Calu3 (cell line): ENCODE measurements at regions of chr12 and their contacts with region 1.

Region 1: GRCh38 chr12:17579205-17580026 is 510.6 kb downstream of the RERGL start:
- DNase-seq: no peak
- H3K4me3 Mint-ChIP-seq: no peak overlapping the region
- H3K27ac Mint-ChIP-seq: no peak overlapping the region
- H3K4me1 Mint-ChIP-seq: peaks cover 10% of the 10 kb centered on the region
- H3K27me3 Mint-ChIP-seq: no peaks in the 10 kb centered on the region
- CTCF ChIP-seq: no peak

Region 2: DNA sequence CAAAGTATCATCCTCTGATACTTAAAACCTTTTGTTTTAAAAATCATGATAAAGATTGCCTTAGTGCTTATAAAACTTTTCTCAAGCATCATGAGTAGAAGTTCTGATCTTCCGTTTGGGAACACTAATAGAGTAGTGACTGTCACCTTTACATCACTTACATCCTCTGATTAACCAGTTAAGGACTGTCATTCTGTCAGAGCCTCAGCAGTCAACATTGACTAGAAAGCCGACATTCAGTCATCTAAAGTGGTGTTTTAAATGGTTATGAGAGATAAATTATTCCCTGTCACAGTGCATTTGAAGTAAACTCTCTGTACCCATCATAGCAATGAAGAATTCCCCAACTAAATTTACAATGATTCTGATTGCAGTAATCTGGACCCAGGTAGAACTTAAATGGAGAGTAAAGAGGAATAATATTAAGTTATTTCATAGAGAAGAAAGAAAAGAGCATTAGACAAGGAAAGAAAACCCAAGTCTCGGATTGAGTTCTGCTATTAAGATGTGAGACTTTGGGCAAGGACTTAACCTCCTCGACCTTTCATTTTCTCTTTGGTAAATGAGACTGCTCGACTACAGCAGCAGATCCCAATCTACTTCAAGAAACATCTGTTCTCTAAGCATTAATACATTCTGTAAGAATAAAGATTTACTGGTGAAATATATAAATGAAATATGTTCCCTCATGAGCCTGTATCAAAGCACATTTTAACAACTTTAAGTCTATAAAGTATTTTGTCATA is 409.5 kb before region 1 on chr12:
- CTCF ChIA-PET with region 1: no interaction called
- intact Hi-C with region 1: loop called (anchors 10 kb)
- DNase-seq: no peak
- H3K4me3 Mint-ChIP-seq: no peak overlapping the region
- H3K27ac Mint-ChIP-seq: no peak overlapping the region
- H3K4me1 Mint-ChIP-seq: no peaks in the 10 kb centered on the region
- H3K27me3 Mint-ChIP-seq: no peaks in the 10 kb centered on the region
- CTCF ChIP-seq: no peak

Region 3: GRCh38 chr12:17829813-17830212 is 250.4 kb after region 1 on chr12:
- CTCF ChIA-PET with region 1: no interaction called
- intact Hi-C with region 1: no loop called
- DNase-seq: no peak
- H3K4me3 Mint-ChIP-seq: no peak overlapping the region
- H3K27ac Mint-ChIP-seq: no peak overlapping the region
- H3K4me1 Mint-ChIP-seq: no peaks in the 10 kb centered on the region
- H3K27me3 Mint-ChIP-seq: no peaks in the 10 kb centered on the region
- CTCF ChIP-seq: no peak

Region 4: GRCh38 chr12:17982556-17982955 is 403.1 kb after region 1 on chr12:
- CTCF ChIA-PET with region 1: no interaction called
- intact Hi-C with region 1: loop called (anchors 10 kb)
- DNase-seq: peak; percentile 35
- H3K4me3 Mint-ChIP-seq: no peak overlapping the region
- H3K27ac Mint-ChIP-seq: no peak overlapping the region
- H3K4me1 Mint-ChIP-seq: peaks cover 9% of the 10 kb centered on the region
- H3K27me3 Mint-ChIP-seq: no peaks in the 10 kb centered on the region
- CTCF ChIP-seq: no peak